ENCODE measurements at regions of chr10 and their contacts with region 1.

Region 1: DNA sequence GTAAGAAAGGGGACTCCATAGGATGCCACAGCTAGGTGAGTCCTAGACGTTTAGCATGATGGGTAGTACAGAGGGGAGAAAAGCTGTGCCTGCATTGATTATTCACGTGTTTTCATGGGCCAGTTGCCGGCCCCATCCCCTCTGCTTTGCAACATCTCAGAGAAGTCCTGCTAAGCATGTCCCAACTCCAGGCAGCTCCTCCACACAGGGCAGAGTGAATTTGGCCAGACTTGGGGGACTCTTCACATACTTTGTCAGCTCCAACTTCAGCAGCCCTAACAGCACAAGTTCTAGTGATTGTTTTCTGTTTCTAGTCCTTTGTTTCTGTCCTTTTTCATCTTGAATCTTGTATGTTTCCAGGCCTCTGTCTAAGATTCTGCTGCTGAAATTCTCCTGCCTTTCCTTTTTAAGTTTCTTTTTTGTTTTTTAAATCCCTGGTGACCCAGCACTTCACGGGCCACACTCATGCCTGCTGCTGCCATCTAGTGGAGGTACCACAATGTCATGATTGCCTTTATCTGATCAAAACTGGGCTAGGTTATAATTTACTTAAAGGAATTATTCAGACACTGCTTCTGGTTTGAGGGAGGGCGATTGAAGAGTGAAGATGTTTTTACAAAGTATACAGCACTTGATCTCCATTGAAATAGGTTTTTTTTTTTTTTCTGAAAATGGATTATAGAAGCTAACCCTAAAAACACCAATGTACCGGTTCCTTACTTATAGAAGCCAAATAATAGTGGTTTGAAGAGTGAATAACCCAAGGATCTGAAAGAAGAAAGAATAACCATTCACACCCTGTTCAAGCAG is 276.9 kb downstream of the CSTF2T start:
- ATAC-seq: peak in 4 of 8 experiments; percentile 59 to 92 (median 84)
- H3K4me3 ChIP-seq: no peak overlapping the region
- H3K27ac ChIP-seq: no peak overlapping the region
- H3K4me1 ChIP-seq: peaks cover 7 to 18% of the 10 kb centered on the region in 2 donors

Region 2: DNA sequence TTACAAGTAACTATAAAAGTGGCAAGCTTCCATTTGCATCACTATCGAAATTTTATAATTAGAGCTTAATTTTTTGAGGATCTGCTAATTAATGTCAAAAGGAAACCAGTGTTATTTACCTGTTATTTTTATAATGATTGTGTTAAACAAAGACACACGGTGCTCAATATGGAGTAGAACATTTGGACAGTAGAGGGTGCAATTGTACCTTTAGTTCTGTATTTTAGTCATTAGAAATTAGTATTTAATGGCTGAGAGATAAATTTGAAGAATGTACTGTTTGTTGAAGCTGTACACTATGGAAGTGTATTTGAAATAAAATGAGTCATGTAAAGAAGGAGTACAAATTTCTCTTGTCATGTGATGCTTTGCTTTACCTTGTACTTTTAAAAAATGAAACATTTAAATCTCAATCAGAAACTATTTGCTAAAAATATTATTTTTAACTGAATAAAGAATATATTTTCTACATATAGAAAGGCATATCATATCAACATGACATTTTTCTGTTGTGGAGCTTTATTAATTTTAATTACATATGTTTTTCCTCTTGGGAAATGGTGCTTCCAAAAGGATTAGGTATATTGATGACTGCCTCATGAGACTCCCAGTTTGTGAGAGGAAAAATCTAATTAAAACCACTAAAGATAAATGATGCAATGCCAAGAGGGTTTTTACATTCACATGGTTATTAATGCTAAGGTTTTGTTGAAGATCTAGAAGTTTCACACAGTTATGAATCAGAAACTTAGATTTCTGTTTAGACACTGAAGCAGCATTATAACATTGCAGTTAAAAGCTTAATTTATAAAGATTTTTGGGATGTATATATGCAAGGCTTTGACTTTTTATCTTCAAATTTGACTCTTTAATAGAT is 358.6 kb before region 1 on chr10:
- in situ Hi-C with region 1: loop called in 2 of 9 experiments (anchors 10 to 25 kb)
- ATAC-seq: peak; percentile 32 to 71 (median 54)
- H3K4me3 ChIP-seq: no peak overlapping the region
- H3K27ac ChIP-seq: no peak overlapping the region
- H3K4me1 ChIP-seq: no peaks in the 10 kb centered on the region